ENCODE measurements at regions of chr20 and their contacts with region 1.

Region 1: DNA sequence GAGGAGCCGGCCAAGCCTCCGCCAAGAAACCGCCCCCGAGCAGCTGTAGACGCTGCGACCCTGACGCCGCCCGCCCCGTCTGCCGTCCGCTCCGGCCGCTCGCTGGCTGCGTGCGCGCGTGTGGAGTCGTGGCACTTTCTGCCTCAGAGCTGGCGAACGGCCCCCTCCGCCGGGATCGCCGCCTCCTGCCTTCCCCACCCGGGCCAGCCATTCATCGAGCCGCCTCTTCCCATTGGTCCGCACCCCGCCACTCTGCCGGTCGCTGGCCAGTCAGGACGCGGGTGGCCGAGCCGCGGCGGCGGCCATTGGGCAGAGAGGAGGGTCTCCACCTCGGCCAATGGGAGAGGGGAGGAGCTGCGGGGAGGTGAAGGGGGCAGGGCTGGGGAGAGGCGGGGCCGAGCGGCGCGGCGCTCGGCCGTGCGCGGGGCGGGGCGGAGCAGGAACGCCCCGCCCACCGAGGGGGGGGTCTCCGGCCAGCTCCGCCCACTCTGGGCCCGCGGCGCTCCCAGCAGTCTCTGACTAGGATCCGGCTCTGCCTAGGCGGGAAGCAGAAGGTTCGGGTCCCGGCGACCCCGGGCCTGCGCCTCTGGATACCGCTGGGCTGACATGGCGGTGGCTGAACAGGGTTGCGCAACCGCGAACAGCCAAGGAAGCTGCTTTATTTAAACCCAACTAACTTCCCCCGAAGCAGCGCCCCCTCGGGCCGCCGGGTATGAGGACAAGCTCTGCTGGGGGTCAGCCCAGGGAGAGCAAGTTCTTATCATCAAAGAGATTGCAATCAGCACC is at the start of gene RRBP1:
- DNase-seq: peak; percentile 96
- H3K4me3 ChIP-seq: peak within 1 kb of the TSS; percentile 75 to 96 (median 85)
- H3K27ac ChIP-seq: peak within 1 kb of the TSS; percentile 92 to 99 (median 98)
- H3K4me1 ChIP-seq: peaks cover 11 to 37% (median 15%) of the 10 kb centered on the region in 3 donors
- H3K27me3 ChIP-seq: peaks cover 0 to 14% (median 0%) of the 10 kb centered on the region in 4 donors
- CTCF ChIP-seq: peak; percentile 49 to 76 (median 61)
- POLR2A ChIP-seq: peak in 3 of 4 donors; percentile 85 to 95 (median 92)
- total RNA-seq, gene RRBP1: 61.4 to 128 (median 72.7) TPM

Region 2: DNA sequence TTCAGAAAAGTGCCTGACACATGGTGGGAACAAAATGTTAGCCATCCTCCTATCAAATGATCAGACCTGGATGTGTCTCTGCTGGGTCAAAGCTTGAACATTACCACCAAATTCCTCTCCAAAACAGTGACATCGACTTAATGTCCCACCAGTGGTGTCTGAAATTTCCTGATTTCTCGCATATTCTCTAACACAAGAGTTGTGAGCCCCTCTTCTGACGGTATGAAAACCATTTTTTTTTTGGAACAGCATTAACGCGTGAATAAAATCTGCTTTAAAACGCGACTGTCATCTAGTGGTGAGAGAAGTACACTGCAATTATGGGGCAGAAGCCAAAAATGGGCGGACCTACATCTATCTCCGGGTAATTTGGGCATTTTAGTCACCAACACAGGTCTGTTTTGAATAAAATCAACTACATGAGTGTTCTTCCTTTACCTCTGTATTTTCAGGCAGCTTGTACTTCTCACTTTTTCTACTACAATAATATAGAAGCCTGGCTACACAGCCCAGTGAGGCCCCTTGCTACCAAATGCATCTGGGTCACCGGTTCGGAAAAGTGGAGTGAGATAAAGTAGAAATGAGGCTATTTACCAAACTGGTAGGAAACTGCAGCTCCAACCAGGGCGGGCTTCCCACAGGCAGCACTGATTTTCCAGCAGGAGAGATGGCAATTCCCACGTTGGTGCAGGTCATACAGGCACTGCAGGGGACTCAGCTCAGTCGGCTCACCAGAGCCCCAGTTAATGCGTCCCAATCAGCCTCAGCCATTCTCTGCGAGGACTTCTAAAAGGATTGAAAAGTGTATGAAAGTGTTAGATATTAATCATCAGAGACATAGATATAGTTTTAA is 313.9 kb after region 1 on chr20:
- intact Hi-C with region 1: loop called (anchors 10 kb)
- DNase-seq: no peak
- H3K4me3 ChIP-seq: no peak overlapping the region
- H3K27ac ChIP-seq: no peak overlapping the region
- H3K4me1 ChIP-seq: peaks cover 2 to 23% (median 5%) of the 10 kb centered on the region in 3 donors
- H3K27me3 ChIP-seq: no peaks in the 10 kb centered on the region
- CTCF ChIP-seq: peak; percentile 86 to 96 (median 92)
- POLR2A ChIP-seq: no peak

Measured in esophagus squamous epithelium (tissue), 5 donors.